Activated naive CD4-positive, alpha-beta T cell treated with anti-CD3 and anti-CD28 coated beads, Interleukin-2, amount 10 ng/mL, durations not matched to agents 7 days and 5 days (primary cell): ENCODE measurements at regions of chr16 and their contacts with region 1.

Region 1: DNA sequence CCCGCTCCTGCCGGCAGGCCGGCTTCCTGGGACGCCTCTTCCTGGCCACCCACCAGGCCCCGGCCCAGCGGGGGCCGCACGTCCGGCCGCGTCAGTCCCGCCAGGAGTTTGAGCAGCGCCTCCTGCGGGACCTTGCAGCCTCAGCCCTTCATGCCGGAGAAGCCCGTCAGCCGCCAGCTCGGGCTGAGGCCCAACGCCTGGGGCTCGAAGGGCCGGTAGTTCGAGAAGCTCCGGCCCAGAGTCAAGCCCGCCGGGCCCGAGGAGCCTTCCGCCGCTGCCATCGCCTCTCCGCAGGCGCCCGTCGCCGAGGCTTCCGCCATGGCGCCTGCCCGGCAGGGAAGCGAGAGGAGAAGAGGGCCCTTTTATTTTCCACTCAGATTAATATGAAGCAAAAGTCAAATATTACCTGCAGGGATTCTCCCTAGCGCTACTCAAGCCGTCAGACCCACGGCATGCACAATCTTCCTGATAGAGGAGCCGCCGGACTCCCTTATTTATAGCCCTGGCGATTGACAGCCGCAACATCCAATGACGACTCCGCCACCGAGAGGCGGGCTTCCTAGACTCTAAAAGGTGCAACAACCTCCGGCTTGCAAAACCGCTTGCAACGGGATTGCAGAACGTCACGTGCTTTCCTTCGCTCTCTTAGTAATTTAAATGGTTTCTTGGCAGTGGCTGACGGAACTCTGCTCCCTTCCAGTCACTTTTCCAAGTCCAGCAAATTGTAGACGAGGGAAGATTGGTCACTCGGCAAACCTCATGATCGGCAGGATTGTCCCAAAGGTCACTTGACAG is at the start of gene SEPHS2:
- DNase-seq: peak; percentile 99
- H3K4me3 Mint-ChIP-seq: peak within 1 kb of the TSS; percentile 95
- H3K27ac Mint-ChIP-seq: peak within 1 kb of the TSS; percentile 97
- H3K4me1 Mint-ChIP-seq: peaks cover 56% of the 10 kb centered on the region
- H3K27me3 Mint-ChIP-seq: no peaks in the 10 kb centered on the region

Region 2: GRCh38 chr16:29805378-29806098 is 640.1 kb before region 1 on chr16:
- CTCF ChIA-PET with region 1: no interaction called
- DNase-seq: peak; percentile 99
- H3K4me3 Mint-ChIP-seq: peak overlapping the region; percentile 100
- H3K27ac Mint-ChIP-seq: peak overlapping the region; percentile 100
- H3K4me1 Mint-ChIP-seq: peaks cover 52% of the 10 kb centered on the region
- H3K27me3 Mint-ChIP-seq: peaks cover 6% of the 10 kb centered on the region

Region 3: GRCh38 chr16:30458561-30459394 is 13.2 kb after region 1 on chr16:
- CTCF ChIA-PET with region 1: interaction called, 14 read pairs
- DNase-seq: peak; percentile 94
- H3K4me3 Mint-ChIP-seq: peak overlapping the region; percentile 66
- H3K27ac Mint-ChIP-seq: peak overlapping the region; percentile 98
- H3K4me1 Mint-ChIP-seq: peaks cover 87% of the 10 kb centered on the region
- H3K27me3 Mint-ChIP-seq: peaks cover 4% of the 10 kb centered on the region

Region 4: DNA sequence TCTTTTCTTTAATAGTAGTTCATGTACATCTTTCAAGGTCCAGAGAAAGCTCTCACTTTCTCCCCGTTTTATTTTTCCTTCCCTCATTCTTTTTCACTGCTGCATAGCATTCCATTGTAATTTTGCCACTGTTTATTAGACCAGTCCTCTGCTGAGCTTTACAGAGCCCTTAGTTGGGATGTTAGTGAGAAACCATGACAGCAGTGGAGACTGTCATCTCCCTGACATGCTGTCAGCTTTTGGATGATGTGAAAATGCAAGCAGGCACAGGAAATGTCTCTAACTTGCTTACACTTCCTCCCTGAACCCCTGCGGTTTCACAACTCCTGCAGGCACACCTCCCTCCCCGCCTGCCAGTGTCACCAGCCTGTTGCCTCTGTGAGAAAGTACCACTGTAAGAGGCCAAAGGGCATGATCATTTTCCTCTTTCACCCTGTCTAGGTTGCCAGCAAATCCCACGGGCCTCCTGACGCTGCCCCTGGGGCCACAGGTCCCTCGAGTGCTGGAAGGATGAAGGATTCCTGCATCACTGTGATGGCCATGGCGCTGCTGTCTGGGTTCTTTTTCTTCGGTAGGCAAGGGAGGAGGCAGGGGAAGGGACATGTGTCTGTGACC is 26.8 kb after region 1 on chr16 and contains the start of gene ITGAL:
- CTCF ChIA-PET with region 1: interaction called, 39 read pairs
- DNase-seq: peak; percentile 91
- H3K4me3 Mint-ChIP-seq: peak within 1 kb of the TSS; percentile 99
- H3K27ac Mint-ChIP-seq: peak within 1 kb of the TSS; percentile 97
- H3K4me1 Mint-ChIP-seq: peaks cover 73% of the 10 kb centered on the region
- H3K27me3 Mint-ChIP-seq: no peaks in the 10 kb centered on the region

Region 5: GRCh38 chr16:30482366-30482765 is 36.8 kb after region 1 on chr16:
- CTCF ChIA-PET with region 1: interaction called, 14 read pairs
- DNase-seq: no peak
- H3K4me3 Mint-ChIP-seq: no peak overlapping the region
- H3K27ac Mint-ChIP-seq: peak overlapping the region; percentile 75
- H3K4me1 Mint-ChIP-seq: peaks cover 73% of the 10 kb centered on the region
- H3K27me3 Mint-ChIP-seq: no peaks in the 10 kb centered on the region